ENCODE measurements at regions of chr1 and their contacts with region 1.

Region 1: GRCh38 chr1:112619520-112620376 is at the start of gene CAPZA1:
- DNase-seq: peak; percentile 92 to 94 (median 94)
- H3K4me3 ChIP-seq: peak within 1 kb of the TSS; percentile 83 to 98
- H3K4me3 Mint-ChIP-seq: peak within 1 kb of the TSS; percentile 94 to 100 (median 99)
- H3K27ac ChIP-seq: peak within 1 kb of the TSS; percentile 100
- H3K27ac Mint-ChIP-seq: peak within 1 kb of the TSS; percentile 96 to 100 (median 100)
- H3K4me1 ChIP-seq: peaks cover 55% of the 10 kb centered on the region
- H3K4me1 Mint-ChIP-seq: peaks cover 27 to 71% (median 40%) of the 10 kb centered on the region in 4 donors
- H3K27me3 ChIP-seq: no peaks in the 10 kb centered on the region
- H3K27me3 Mint-ChIP-seq: no peaks in the 10 kb centered on the region
- total RNA-seq, gene CAPZA1: 149 to 157 TPM

Region 2: DNA sequence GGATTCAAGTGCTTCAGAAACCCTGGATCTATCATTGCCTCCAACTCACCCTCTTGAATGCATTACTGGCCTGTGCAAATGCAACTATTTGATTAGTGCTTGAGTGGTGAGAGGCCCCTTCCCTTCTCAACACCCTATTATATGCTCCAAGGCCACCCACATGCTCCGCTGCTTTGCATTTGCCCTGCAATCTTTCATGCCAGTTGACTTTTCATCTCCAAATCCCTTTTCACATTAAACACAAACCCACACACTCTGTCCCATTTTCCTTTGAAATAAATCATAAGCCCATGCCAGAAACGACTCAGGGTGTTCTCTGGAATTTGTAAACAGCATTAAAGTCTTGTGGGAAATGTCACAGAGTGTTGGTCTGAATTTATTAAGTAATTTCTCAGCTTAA is 302.6 kb before region 1 on chr1:
- CTCF ChIA-PET with region 1: no interaction called
- POLR2A ChIA-PET with region 1: no interaction called
- intact Hi-C with region 1: no loop called
- DNase-seq: no peak
- H3K4me3 ChIP-seq: no peak overlapping the region
- H3K4me3 Mint-ChIP-seq: no peak overlapping the region
- H3K27ac ChIP-seq: no peak overlapping the region
- H3K27ac Mint-ChIP-seq: no peak overlapping the region
- H3K4me1 ChIP-seq: no peaks in the 10 kb centered on the region
- H3K4me1 Mint-ChIP-seq: peaks cover 0 to 3% (median 1%) of the 10 kb centered on the region in 4 donors
- H3K27me3 ChIP-seq: no peaks in the 10 kb centered on the region
- H3K27me3 Mint-ChIP-seq: peaks cover 7 to 10% of the 10 kb centered on the region in 2 donors

Region 3: DNA sequence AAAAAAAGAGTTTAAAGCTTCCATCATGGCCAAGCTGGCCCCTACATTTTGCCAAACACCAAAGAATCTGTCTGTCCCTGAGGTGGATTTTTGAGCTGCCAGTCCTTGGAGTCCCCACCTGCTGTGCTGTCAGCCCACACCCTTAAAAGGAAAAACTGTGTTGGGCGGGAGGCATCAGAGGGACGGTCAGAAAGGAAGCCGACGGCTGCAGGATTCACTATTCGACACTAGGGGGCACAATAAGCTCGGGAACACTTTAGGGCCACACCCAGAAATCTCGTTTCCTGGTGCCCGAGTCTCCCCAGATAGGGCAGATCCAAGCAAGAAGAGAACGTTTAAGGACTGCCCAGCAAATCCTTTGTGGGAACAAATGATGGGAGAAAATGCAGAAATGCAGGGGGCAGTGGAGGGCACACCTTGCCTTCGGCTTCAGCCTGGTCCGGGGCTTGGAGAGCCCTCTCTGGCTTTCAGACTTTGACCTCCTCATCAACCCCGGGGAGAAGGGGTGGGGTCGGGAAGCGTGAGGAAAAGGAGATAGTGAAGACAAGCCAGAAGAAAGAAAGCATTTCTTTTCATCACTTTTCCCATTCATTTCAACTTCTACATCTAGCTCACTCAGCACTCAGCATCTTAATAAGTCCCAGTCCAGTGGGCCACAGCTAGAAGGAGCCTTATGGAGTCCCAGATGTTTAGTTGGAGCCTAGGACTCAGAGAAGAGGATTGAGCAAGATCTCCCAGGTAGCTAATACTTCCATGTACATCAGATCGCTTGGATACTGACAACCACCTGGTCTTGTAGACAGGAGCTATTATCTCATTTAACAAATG is 228.8 kb before region 1 on chr1:
- CTCF ChIA-PET with region 1: interaction called, 4 read pairs
- POLR2A ChIA-PET with region 1: interaction called, 7 read pairs
- intact Hi-C with region 1: loop called (anchors 2 kb)
- DNase-seq: peak; percentile 72 to 79 (median 78)
- H3K4me3 ChIP-seq: no peak overlapping the region
- H3K4me3 Mint-ChIP-seq: peak overlapping the region in 5 of 8 donors; percentile 1 to 71 (median 40)
- H3K27ac ChIP-seq: no peak overlapping the region
- H3K27ac Mint-ChIP-seq: peak overlapping the region in 1 of 7 donors; percentile 9
- H3K4me1 ChIP-seq: peaks cover 13% of the 10 kb centered on the region
- H3K4me1 Mint-ChIP-seq: peaks cover 9 to 15% (median 10%) of the 10 kb centered on the region in 4 donors
- H3K27me3 ChIP-seq: peaks cover 4% of the 10 kb centered on the region
- H3K27me3 Mint-ChIP-seq: peaks cover 12 to 24% of the 10 kb centered on the region in 2 donors

Region 4: DNA sequence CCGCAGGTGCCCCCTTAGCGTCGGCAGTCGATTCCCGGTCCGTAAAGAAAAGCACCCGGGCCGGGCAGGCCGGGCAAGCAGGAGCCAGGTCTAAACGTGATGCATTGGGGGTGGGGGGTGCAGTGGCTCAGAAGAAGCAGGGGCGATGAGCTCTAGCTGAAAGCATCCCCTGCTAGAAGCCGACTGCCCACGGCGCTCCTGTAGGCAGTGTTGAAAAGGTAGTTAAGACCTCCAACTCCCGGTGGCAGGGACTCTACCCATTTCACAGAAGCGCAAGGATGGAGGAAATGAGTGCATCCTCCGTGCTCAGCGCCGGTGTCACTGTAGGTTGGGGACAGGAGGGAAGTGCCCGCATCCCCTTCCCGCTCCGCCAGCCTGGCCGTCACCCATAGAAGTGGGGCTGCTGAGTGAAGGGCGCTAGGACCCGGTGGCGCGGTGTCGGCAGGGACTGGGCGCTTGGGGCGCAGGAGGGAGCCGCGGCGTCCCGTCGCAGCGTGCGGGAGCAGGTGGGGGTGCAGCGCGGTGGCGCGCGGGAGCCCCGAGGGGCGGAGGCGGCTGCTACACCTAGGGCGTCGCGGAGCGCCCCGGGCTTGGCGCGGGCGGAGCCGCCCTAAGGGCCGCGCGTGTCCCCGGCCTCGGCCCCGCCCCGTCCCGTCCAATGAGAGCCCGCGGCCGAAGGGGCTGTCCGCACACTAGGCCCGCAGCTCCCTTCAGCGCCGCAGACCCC is 111.3 kb before region 1 on chr1 and contains the start of gene WNT2B:
- CTCF ChIA-PET with region 1: interaction called, 7 read pairs
- POLR2A ChIA-PET with region 1: interaction called, 12 read pairs
- intact Hi-C with region 1: no loop called
- DNase-seq: peak; percentile 55 to 63 (median 62)
- H3K4me3 ChIP-seq: peak within 1 kb of the TSS; percentile 52 to 67
- H3K4me3 Mint-ChIP-seq: peak within 1 kb of the TSS; percentile 84 to 93 (median 86)
- H3K27ac ChIP-seq: no peak within 1 kb of the TSS
- H3K27ac Mint-ChIP-seq: peak within 1 kb of the TSS in 6 of 7 donors; percentile 2 to 64 (median 62)
- H3K4me1 ChIP-seq: peaks cover 13% of the 10 kb centered on the region
- H3K4me1 Mint-ChIP-seq: peaks cover 0 to 20% (median 3%) of the 10 kb centered on the region in 4 donors
- H3K27me3 ChIP-seq: peaks cover 6% of the 10 kb centered on the region
- H3K27me3 Mint-ChIP-seq: peaks cover 7 to 11% of the 10 kb centered on the region in 2 donors
- total RNA-seq, gene WNT2B: 0.70 to 0.91 TPM

Region 5: DNA sequence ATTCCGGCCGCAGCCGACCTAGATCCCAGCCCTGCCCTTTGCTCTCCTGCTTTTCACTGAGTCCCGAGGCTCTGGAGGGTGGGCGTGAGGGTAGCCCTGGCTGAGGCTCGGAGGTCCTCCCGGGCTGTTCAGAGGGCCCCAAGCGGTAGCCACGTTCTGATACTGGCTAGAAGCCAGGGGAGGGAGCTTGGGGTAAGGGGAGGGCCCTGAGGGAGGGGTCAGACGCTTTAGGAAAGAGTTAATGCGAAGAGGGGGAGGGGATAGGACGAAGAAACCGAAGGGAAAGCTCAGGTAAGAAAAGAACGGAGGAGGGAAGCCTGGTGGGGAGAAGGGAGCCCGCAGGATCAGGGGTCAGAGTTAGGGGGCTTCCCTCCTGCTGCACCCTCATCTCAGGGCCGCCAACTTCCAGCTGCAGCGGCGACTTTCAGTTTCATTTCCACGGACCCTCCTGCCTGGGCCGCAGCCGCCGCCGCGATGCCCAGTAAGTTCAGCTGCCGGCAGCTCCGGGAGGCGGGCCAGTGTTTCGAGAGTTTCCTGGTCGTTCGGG is 54.8 kb after region 1 on chr1 and contains the start of gene MOV10:
- CTCF ChIA-PET with region 1: interaction called, 7 read pairs
- POLR2A ChIA-PET with region 1: interaction called, 84 read pairs
- intact Hi-C with region 1: loop called (anchors 1 kb)
- DNase-seq: peak; percentile 59 to 74 (median 64)
- H3K4me3 ChIP-seq: peak within 1 kb of the TSS; percentile 71 to 82
- H3K4me3 Mint-ChIP-seq: peak within 1 kb of the TSS; percentile 96 to 98 (median 97)
- H3K27ac ChIP-seq: peak within 1 kb of the TSS; percentile 86
- H3K27ac Mint-ChIP-seq: peak within 1 kb of the TSS; percentile 93 to 98 (median 97)
- H3K4me1 ChIP-seq: peaks cover 53% of the 10 kb centered on the region
- H3K4me1 Mint-ChIP-seq: peaks cover 40 to 65% (median 52%) of the 10 kb centered on the region in 4 donors
- H3K27me3 ChIP-seq: no peaks in the 10 kb centered on the region
- H3K27me3 Mint-ChIP-seq: no peaks in the 10 kb centered on the region
- total RNA-seq, gene MOV10: 90.6 to 96.1 TPM

Region 6: DNA sequence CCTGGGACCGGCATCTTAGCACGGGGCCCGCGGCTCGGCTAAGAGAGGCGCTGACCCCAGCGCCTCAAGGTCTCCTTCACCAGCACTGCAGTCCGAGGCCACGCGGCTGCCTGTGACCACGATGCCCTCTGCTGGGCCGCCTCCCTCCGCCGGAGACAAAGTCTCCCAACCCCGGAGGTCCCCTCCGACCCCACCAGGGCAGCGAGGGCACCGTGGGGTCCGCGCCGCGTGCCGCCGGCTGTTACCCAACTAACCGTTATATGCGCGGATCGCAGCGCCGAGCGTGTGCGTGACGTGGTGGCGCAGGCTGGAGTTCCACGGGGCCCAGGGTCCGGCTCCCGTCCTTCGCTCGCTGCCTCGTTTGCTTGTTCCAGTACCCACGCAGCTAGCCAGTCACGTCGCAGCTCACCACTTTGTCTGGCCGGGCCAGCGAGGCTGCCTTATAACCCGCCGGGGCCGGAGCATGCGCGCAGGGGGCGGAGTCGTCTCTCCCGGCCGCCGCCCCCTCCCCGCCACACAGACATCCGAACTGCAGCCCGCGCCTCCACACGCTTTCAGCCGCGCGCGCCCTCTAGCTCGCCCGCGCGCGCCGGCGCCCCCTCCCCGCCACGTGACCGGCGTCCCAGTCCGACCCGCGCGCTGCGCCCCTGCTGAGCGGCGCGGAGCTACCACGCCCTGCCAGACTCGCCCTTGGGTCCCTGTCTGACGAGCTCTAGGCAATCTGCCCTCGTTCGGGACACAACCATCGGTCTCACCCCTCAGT is 336.2 kb after region 1 on chr1 and contains the start of gene SLC16A1:
- CTCF ChIA-PET with region 1: no interaction called
- POLR2A ChIA-PET with region 1: interaction called, 3 read pairs
- intact Hi-C with region 1: loop called (anchors 10 kb)
- DNase-seq: peak; percentile 85 to 89 (median 87)
- H3K4me3 ChIP-seq: peak within 1 kb of the TSS; percentile 59 to 96
- H3K4me3 Mint-ChIP-seq: peak within 1 kb of the TSS; percentile 76 to 99 (median 97)
- H3K27ac ChIP-seq: peak within 1 kb of the TSS; percentile 80
- H3K27ac Mint-ChIP-seq: peak within 1 kb of the TSS; percentile 68 to 98 (median 95)
- H3K4me1 ChIP-seq: peaks cover 34% of the 10 kb centered on the region
- H3K4me1 Mint-ChIP-seq: peaks cover 38 to 73% (median 52%) of the 10 kb centered on the region in 4 donors
- H3K27me3 ChIP-seq: no peaks in the 10 kb centered on the region
- H3K27me3 Mint-ChIP-seq: no peaks in the 10 kb centered on the region
- total RNA-seq, gene SLC16A1: 9.7 to 12.7 TPM

Region 7: DNA sequence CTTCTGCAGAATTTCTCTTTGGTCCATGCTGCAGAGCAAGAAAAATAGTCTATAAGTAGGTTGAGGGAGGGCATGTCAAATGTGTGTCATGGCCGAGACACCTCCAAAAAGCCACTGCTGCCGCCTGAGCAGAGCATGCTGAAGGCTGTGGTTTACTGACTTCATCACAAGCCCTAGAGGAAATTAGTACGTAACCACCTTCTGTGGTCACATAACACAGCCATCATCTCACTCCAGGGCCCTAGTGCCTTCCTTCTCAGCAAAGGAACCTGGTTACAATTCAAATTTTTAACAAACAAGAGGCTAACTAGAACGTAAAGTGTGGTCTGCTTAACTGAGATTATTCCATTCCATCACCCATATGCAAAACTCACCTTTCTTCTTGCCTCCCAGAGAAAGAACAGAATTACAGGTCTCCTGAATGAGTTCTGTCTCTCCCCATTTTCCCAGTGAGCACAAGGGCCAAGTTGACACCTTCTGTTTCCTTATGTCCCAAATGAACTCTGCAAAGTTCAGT is 1251.9 kb after region 1 on chr1 and contains the start of gene PTPN22:
- CTCF ChIA-PET with region 1: no interaction called
- POLR2A ChIA-PET with region 1: interaction called, 3 read pairs
- intact Hi-C with region 1: loop called (anchors 5 kb)
- DNase-seq: peak; percentile 85 to 95 (median 90)
- H3K4me3 ChIP-seq: peak within 1 kb of the TSS; percentile 48 to 71
- H3K4me3 Mint-ChIP-seq: peak within 1 kb of the TSS; percentile 85 to 95 (median 90)
- H3K27ac ChIP-seq: peak within 1 kb of the TSS; percentile 79
- H3K27ac Mint-ChIP-seq: peak within 1 kb of the TSS; percentile 96 to 99 (median 98)
- H3K4me1 ChIP-seq: peaks cover 74% of the 10 kb centered on the region
- H3K4me1 Mint-ChIP-seq: peaks cover 56 to 83% (median 66%) of the 10 kb centered on the region in 4 donors
- H3K27me3 ChIP-seq: no peaks in the 10 kb centered on the region
- H3K27me3 Mint-ChIP-seq: no peaks in the 10 kb centered on the region
- total RNA-seq, gene PTPN22: 32.2 to 33.7 TPM